Activated CD8-positive, alpha-beta memory T cell treated with anti-CD3 and anti-CD28 coated beads, Interleukin-2, amount 10 ng/mL, durations not matched to agents 7 days and 5 days (primary cell): ENCODE measurements at regions of chr5 and their contacts with region 1.

Region 1: GRCh38 chr5:177086924-177087706 is 400 bp downstream of the FGFR4 start:
- DNase-seq: peak; percentile 65
- ATAC-seq: peak; percentile 85
- H3K4me3 Mint-ChIP-seq: no peak overlapping the region
- H3K27ac Mint-ChIP-seq: no peak overlapping the region
- H3K4me1 Mint-ChIP-seq: peaks cover 9% of the 10 kb centered on the region
- H3K27me3 Mint-ChIP-seq: peaks cover 45% of the 10 kb centered on the region

Region 2: DNA sequence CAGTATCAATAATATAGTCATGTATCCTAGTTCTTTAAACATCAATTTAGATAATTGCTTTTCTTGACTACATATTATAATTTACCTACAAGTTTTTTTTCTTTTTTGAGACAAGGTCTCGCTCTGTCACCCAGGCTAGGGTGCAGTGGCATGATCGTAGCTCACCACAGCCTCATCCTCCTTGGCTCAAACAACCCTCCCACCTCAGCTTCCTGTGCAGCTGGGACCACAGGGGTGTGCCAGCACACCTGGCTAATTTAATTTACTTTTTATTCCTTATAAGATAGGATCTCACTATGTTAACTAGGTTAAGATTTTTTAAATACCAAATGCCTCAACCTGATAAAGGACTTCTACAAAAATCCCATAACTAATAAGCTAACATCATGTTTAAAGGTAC is 101.6 kb before region 1 on chr5:
- CTCF ChIA-PET with region 1: no interaction called
- DNase-seq: peak; percentile 74
- ATAC-seq: peak; percentile 83
- H3K4me3 Mint-ChIP-seq: no peak overlapping the region
- H3K27ac Mint-ChIP-seq: peak overlapping the region; percentile 56
- H3K4me1 Mint-ChIP-seq: peaks cover 28% of the 10 kb centered on the region
- H3K27me3 Mint-ChIP-seq: no peaks in the 10 kb centered on the region

Region 3: DNA sequence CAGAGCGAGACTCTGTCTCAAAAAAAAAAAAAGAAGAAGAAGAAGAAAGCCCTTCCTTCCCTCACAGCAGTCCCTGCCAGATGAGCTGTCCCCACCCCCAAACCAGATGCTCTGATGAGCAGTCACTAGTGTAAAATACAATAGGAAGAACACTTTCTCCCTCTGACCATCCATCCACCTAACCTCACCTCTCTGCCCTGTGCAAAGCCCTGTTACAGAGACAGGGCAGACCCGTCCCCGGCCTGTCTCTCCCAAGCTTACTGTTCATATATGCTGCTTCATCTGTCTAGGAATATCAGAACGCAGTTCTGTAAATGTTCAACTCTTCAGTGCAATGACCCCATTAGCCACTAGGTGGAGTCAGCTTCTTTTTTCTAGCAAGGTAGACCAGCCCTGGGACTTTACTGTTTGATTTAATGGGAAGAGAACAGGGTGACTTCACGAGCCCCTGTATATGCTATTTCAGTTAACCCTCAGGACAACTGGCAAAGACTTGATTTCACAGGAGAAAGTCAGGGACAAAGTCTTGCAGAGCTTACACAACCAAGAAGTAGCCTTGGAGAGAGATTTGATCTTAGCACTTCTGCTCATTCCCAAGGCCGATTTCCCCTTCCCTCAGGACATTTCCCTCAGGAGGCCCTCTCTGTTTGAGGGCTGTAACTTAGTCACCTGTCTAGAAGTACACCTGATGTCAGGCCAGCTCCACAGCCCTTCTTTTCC is 15.3 kb before region 1 on chr5:
- CTCF ChIA-PET with region 1: interaction called, 64 read pairs
- DNase-seq: peak; percentile 76
- ATAC-seq: peak; percentile 79
- H3K4me3 Mint-ChIP-seq: no peak overlapping the region
- H3K27ac Mint-ChIP-seq: peak overlapping the region; percentile 34
- H3K4me1 Mint-ChIP-seq: peaks cover 11% of the 10 kb centered on the region
- H3K27me3 Mint-ChIP-seq: no peaks in the 10 kb centered on the region

Region 4: GRCh38 chr5:177265395-177265794 is 178.3 kb after region 1 on chr5:
- CTCF ChIA-PET with region 1: no interaction called
- DNase-seq: no peak
- ATAC-seq: no peak
- H3K4me3 Mint-ChIP-seq: no peak overlapping the region
- H3K27ac Mint-ChIP-seq: no peak overlapping the region
- H3K4me1 Mint-ChIP-seq: peaks cover 10% of the 10 kb centered on the region
- H3K27me3 Mint-ChIP-seq: no peaks in the 10 kb centered on the region